ENCODE measurements at regions of chr5 and their contacts with region 1.

Region 1: DNA sequence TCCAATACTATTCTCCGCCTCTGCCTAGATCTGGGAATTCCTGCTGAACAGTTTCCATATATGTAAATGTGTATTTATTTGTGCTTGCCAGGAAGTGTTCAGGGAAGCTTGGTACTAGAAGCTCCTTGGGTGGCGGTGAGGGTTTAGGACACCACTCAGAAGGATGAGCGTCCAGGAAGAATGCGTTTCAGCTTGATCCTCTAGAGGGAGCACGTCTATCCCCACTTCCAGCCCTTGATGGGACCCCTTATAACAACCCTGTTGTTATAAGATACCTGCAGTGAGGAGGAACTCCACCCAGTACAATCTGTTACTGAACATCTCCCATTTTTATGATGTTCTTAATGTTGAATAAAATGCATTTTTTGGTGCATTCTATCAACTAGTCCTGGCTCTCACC is 88.9 kb downstream of the CYFIP2 start:
- DNase-seq: no peak
- H3K4me3 Mint-ChIP-seq: no peak overlapping the region
- H3K27ac Mint-ChIP-seq: no peak overlapping the region
- H3K4me1 Mint-ChIP-seq: peaks cover 53% of the 10 kb centered on the region
- H3K27me3 Mint-ChIP-seq: no peaks in the 10 kb centered on the region

Region 2: GRCh38 chr5:157219491-157220271 is 135.1 kb before region 1 on chr5:
- CTCF ChIA-PET with region 1: interaction called, 6 read pairs
- POLR2A ChIA-PET with region 1: no interaction called
- intact Hi-C with region 1: loop called (anchors 1 kb)
- DNase-seq: peak; percentile 58
- H3K4me3 Mint-ChIP-seq: peak overlapping the region; percentile 58
- H3K27ac Mint-ChIP-seq: peak overlapping the region; percentile 98
- H3K4me1 Mint-ChIP-seq: peaks cover 86% of the 10 kb centered on the region
- H3K27me3 Mint-ChIP-seq: no peaks in the 10 kb centered on the region

Region 3: GRCh38 chr5:157342822-157343402 is 11.9 kb before region 1 on chr5:
- CTCF ChIA-PET with region 1: interaction called, 72 read pairs
- POLR2A ChIA-PET with region 1: interaction called, 3 read pairs
- intact Hi-C with region 1: loop called (anchors 1 kb)
- DNase-seq: peak; percentile 52
- H3K4me3 Mint-ChIP-seq: no peak overlapping the region
- H3K27ac Mint-ChIP-seq: peak overlapping the region; percentile 91
- H3K4me1 Mint-ChIP-seq: peaks cover 39% of the 10 kb centered on the region
- H3K27me3 Mint-ChIP-seq: no peaks in the 10 kb centered on the region

Region 4: GRCh38 chr5:157486221-157486681 is 131.5 kb after region 1 on chr5:
- CTCF ChIA-PET with region 1: no interaction called
- POLR2A ChIA-PET with region 1: no interaction called
- intact Hi-C with region 1: no loop called
- DNase-seq: no peak
- H3K4me3 Mint-ChIP-seq: no peak overlapping the region
- H3K27ac Mint-ChIP-seq: no peak overlapping the region
- H3K4me1 Mint-ChIP-seq: peaks cover 24% of the 10 kb centered on the region
- H3K27me3 Mint-ChIP-seq: no peaks in the 10 kb centered on the region

Region 5: GRCh38 chr5:157540707-157541446 is 186.1 kb after region 1 on chr5:
- CTCF ChIA-PET with region 1: no interaction called
- POLR2A ChIA-PET with region 1: interaction called, 12 read pairs
- intact Hi-C with region 1: loop called (anchors 2 kb)
- DNase-seq: peak; percentile 74
- H3K4me3 Mint-ChIP-seq: peak overlapping the region; percentile 65
- H3K27ac Mint-ChIP-seq: peak overlapping the region; percentile 98
- H3K4me1 Mint-ChIP-seq: peaks cover 87% of the 10 kb centered on the region
- H3K27me3 Mint-ChIP-seq: no peaks in the 10 kb centered on the region

Region 6: DNA sequence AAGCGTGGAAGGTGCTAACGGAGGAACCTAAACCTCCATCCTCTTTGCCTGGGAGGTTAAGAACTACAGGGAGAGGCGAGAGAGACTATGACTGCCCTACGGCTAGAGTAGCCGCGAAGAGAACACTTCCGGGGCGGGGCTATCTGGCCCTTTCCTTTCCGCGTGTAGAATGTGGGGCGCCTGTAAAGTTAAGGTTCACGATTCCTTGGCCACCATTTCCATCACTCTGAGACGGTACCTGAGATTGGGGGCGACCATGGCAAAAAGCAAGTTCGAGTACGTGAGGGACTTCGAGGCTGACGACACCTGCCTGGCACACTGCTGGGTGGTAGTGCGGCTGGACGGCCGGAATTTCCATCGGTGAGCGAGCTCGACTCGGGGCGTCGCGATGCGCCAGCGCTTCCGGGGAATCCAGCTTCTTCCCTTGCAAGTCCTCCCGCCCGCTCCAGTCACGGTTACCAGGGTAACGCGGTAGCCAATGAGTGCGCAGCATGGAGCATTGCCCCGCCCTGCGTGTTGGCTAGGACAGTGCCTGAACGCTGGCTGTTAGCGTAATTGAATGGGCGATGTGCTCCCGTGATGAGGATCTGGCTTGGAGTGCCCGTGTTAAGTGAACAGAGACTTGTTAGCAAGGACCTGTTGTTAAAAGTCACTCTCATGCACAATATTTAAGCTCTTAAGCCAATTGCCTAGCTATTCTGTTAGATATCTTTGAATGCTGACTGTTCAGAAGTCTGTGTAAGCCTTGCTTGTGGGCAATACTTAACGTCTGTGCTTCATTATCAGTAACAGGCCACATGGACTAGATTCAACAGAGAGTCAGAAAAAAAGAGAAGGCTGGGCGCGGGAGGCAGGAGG is 376.7 kb after region 1 on chr5 and contains the start of gene THG1L:
- CTCF ChIA-PET with region 1: no interaction called
- POLR2A ChIA-PET with region 1: interaction called, 7 read pairs
- intact Hi-C with region 1: loop called (anchors 5 kb)
- DNase-seq: peak; percentile 100
- H3K4me3 Mint-ChIP-seq: peak within 1 kb of the TSS; percentile 95
- H3K27ac Mint-ChIP-seq: peak within 1 kb of the TSS; percentile 97
- H3K4me1 Mint-ChIP-seq: peaks cover 33% of the 10 kb centered on the region
- H3K27me3 Mint-ChIP-seq: no peaks in the 10 kb centered on the region
- total RNA-seq, gene THG1L: 28.6 to 33.5 TPM

Measured in activated CD4-positive, alpha-beta memory T cell treated with anti-CD3 and anti-CD28 coated beads for 36 hours (primary cell).